GM12878 (cell line): ENCODE measurements at regions of chr10 and their contacts with region 1.

Region 1: GRCh38 chr10:26881600-26882331 is 21.0 kb upstream of the ABI1 start:
- DNase-seq: no peak
- ATAC-seq: peak; percentile 96
- H3K4me3 ChIP-seq: no peak overlapping the region
- H3K27ac ChIP-seq: no peak overlapping the region
- H3K4me1 ChIP-seq: no peaks in the 10 kb centered on the region
- H3K27me3 ChIP-seq: no peaks in the 10 kb centered on the region
- CTCF ChIP-seq: peak; percentile 72 to 80 (median 77)
- EP300 ChIP-seq: no peak
- POLR2A ChIP-seq: no peak
- RAD21 ChIP-seq: peak; percentile 98

Region 2: GRCh38 chr10:26612151-26612915 is 269.4 kb before region 1 on chr10:
- CTCF ChIA-PET with region 1: interaction called, 3 read pairs
- POLR2A ChIA-PET with region 1: no interaction called
- RAD21 ChIA-PET with region 1: interaction called, 3 read pairs
- SMC1A ChIA-PET with region 1: interaction called, 3 read pairs
- in situ Hi-C with region 1: loop called (anchors 5 kb)
- intact Hi-C with region 1: loop called (anchors 2 kb)
- DNase-seq: no peak
- ATAC-seq: no peak
- H3K4me3 ChIP-seq: no peak overlapping the region
- H3K27ac ChIP-seq: no peak overlapping the region
- H3K4me1 ChIP-seq: no peaks in the 10 kb centered on the region
- H3K27me3 ChIP-seq: no peaks in the 10 kb centered on the region
- CTCF ChIP-seq: no peak
- EP300 ChIP-seq: no peak
- POLR2A ChIP-seq: no peak
- RAD21 ChIP-seq: no peak

Region 3: GRCh38 chr10:26714415-26715136 is 167.2 kb before region 1 on chr10:
- CTCF ChIA-PET with region 1: interaction called, 10 read pairs
- POLR2A ChIA-PET with region 1: no interaction called
- RAD21 ChIA-PET with region 1: interaction called, 4 read pairs
- SMC1A ChIA-PET with region 1: interaction called, 3 read pairs
- in situ Hi-C with region 1: no loop called
- intact Hi-C with region 1: no loop called
- DNase-seq: no peak
- ATAC-seq: no peak
- H3K4me3 ChIP-seq: no peak overlapping the region
- H3K27ac ChIP-seq: no peak overlapping the region
- H3K4me1 ChIP-seq: no peaks in the 10 kb centered on the region
- H3K27me3 ChIP-seq: no peaks in the 10 kb centered on the region
- CTCF ChIP-seq: no peak
- EP300 ChIP-seq: no peak
- POLR2A ChIP-seq: no peak
- RAD21 ChIP-seq: no peak

Region 4: GRCh38 chr10:26737730-26738129 is 144.0 kb before region 1 on chr10:
- CTCF ChIA-PET with region 1: interaction called, 10 read pairs
- POLR2A ChIA-PET with region 1: no interaction called
- RAD21 ChIA-PET with region 1: interaction called, 4 read pairs
- SMC1A ChIA-PET with region 1: interaction called, 3 read pairs
- in situ Hi-C with region 1: no loop called
- intact Hi-C with region 1: no loop called
- DNase-seq: peak; percentile 95
- ATAC-seq: peak; percentile 90
- H3K4me3 ChIP-seq: no peak overlapping the region
- H3K27ac ChIP-seq: peak overlapping the region; percentile 92
- H3K4me1 ChIP-seq: peaks cover 62% of the 10 kb centered on the region
- H3K27me3 ChIP-seq: no peaks in the 10 kb centered on the region
- CTCF ChIP-seq: no peak
- EP300 ChIP-seq: peak; percentile 11 to 85; a peak in 3 of 4 replicates
- POLR2A ChIP-seq: peak; percentile 76
- RAD21 ChIP-seq: peak; percentile 24; the same call in 1 of the 2 replicates

Region 5: DNA sequence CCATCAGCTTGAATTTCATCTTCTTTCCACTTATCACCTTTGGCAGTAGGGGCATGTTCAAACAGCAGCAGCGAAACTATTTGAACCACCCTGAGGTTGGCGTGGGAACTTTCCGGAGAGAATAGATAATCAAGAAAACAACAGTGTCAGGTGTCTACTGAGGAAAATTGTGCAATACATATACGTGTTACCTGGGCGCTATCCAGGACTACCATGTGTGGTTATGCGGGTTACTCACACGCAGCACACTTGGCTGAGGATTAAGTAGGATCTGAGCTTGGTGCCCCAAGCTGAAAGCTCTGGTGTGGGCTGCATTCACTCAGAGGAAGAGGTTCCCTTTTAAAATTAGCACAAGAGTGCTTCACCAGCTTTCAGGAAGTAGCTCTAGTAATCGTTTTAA is 12.2 kb before region 1 on chr10:
- CTCF ChIA-PET with region 1: interaction called, 24 read pairs
- POLR2A ChIA-PET with region 1: no interaction called
- RAD21 ChIA-PET with region 1: interaction called, 8 read pairs
- SMC1A ChIA-PET with region 1: interaction called, 9 read pairs
- in situ Hi-C with region 1: no loop called
- intact Hi-C with region 1: no loop called
- DNase-seq: no peak
- ATAC-seq: no peak
- H3K4me3 ChIP-seq: no peak overlapping the region
- H3K27ac ChIP-seq: no peak overlapping the region
- H3K4me1 ChIP-seq: no peaks in the 10 kb centered on the region
- H3K27me3 ChIP-seq: no peaks in the 10 kb centered on the region
- CTCF ChIP-seq: no peak
- EP300 ChIP-seq: no peak
- POLR2A ChIP-seq: no peak
- RAD21 ChIP-seq: no peak

Region 6: GRCh38 chr10:26962835-26963234 is 81.1 kb after region 1 on chr10:
- CTCF ChIA-PET with region 1: no interaction called
- POLR2A ChIA-PET with region 1: no interaction called
- RAD21 ChIA-PET with region 1: no interaction called
- SMC1A ChIA-PET with region 1: no interaction called
- in situ Hi-C with region 1: no loop called
- intact Hi-C with region 1: no loop called
- DNase-seq: no peak
- ATAC-seq: no peak
- H3K4me3 ChIP-seq: no peak overlapping the region
- H3K27ac ChIP-seq: no peak overlapping the region
- H3K4me1 ChIP-seq: no peaks in the 10 kb centered on the region
- H3K27me3 ChIP-seq: no peaks in the 10 kb centered on the region
- CTCF ChIP-seq: no peak
- EP300 ChIP-seq: no peak
- POLR2A ChIP-seq: no peak
- RAD21 ChIP-seq: no peak